Lower leg skin (tissue), 4 donors: ENCODE measurements at regions of chr20 and their contacts with region 1.

Region 1: GRCh38 chr20:44080646-44081267 is 106.2 kb downstream of the JPH2 start:
- DNase-seq: peak; percentile 70 to 92
- H3K4me3 ChIP-seq: no peak overlapping the region
- CTCF ChIP-seq: peak in 1 of 3 donors; percentile 98
- POLR2A ChIP-seq: no peak

Region 2: GRCh38 chr20:43456809-43457639 is 623.7 kb before region 1 on chr20:
- intact Hi-C with region 1: loop called (anchors 10 kb)
- DNase-seq: peak; percentile 94 to 98
- H3K4me3 ChIP-seq: peak overlapping the region; percentile 49
- CTCF ChIP-seq: no peak
- POLR2A ChIP-seq: no peak

Region 3: DNA sequence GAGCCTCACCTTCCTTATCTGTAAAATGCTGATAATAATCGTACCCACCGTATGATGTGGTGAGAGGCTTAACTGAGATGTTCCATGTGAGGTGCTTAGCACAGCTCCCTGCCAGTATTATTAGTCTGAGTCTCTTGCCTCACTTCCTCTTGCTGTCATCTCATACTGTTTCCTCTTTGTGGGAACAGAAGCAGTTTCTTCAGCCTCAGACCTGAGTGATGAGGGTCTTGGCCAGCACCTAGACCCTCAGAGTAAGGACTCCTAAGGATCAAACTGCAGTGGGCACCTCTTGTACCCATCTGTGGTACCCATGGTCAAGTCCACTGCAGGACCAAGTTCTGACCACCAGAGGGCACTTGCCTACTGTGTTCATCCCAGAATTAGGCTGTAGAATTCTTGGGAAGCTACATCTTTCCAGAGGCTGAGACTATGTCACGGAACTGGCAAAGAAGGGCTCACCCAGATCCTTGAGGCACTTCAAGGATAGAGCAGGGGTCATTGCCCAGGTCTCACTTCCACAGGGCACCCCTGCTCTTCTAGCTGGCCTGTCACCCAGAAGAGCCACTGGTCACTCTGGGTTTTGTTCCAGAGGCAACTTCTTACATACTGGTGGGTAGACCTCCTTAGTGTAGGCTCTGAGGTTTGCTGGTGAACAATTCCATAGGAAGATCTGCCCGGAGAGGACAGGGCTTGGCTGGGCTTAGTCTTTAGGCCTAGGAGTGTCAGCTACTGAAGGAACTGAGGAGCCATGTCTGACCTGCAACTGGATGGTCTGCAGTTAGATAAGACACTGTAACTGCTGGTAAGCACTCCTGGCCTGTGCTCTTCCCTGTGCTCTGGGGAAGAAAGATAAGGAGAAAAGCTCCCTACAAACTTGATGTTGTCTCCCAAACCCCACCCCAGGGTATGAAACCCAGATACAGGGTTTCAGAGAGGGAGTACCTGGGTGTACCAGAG is 542.6 kb before region 1 on chr20:
- intact Hi-C with region 1: loop called (anchors 10 kb)
- DNase-seq: peak; percentile 41 to 89
- H3K4me3 ChIP-seq: no peak overlapping the region
- CTCF ChIP-seq: no peak
- POLR2A ChIP-seq: no peak

Region 4: DNA sequence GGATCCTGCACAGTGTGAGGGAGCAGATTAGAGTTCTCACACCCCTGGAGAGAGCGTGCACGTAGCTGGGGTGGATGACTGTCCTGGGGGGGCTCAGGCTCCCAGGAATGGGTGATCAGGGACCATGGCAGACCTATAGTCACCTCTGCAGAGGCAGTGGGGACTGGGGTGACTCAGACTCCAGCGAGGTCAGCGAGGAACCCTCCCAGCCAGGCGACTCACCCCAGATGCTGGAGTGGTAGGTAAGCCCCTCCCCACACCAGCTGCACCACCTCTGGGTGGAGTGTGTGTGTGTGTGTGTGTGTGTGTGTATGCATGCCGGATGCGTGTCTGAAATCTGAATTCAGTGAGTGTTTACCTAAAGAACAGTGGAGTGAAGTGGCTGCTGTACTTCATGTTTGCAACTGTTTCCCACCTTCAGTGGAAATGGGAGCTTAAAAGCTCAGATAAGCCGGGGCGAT is 336.6 kb before region 1 on chr20:
- intact Hi-C with region 1: loop called (anchors 5 kb)
- DNase-seq: no peak
- H3K4me3 ChIP-seq: no peak overlapping the region
- CTCF ChIP-seq: no peak
- POLR2A ChIP-seq: no peak